ENCODE measurements at regions of chr3 and their contacts with region 1.

Region 1: GRCh38 chr3:51434746-51435327 is 43.8 kb downstream of the RBM15B start:
- DNase-seq: peak; percentile 46 to 48
- H3K4me3 ChIP-seq: no peak overlapping the region
- H3K4me3 Mint-ChIP-seq: no peak overlapping the region
- H3K27ac Mint-ChIP-seq: no peak overlapping the region
- H3K4me1 ChIP-seq: no peaks in the 10 kb centered on the region
- H3K4me1 Mint-ChIP-seq: no peaks in the 10 kb centered on the region
- H3K27me3 ChIP-seq: no peaks in the 10 kb centered on the region
- H3K27me3 Mint-ChIP-seq: no peaks in the 10 kb centered on the region
- CTCF ChIP-seq: peak; percentile 45 to 76

Region 2: DNA sequence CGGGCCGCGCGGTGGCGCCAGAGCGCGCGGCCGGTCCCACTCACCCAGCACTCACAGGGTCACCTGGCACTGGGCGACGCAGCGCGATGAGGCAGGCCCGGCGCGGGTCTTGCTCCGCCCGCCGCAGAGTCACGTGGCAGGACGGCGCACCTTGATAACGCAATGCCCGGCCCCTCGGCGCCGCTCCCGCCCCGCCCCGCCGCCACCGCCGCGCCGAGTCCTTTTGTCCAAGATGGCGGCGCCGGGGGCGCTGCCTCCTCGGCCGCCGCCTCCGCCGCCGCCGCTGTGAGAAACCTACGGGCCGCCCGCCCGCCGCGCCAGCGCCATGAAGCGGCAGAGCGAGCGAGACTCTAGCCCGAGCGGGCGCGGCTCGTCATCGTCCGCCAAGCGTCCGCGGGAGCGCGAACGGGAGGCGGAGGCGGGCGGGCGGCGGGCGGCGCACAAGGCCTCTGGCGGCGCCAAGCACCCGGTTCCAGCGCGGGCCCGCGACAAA is 43.7 kb before region 1 on chr3 and contains the start of gene RBM15B:
- CTCF ChIA-PET with region 1: no interaction called
- POLR2A ChIA-PET with region 1: no interaction called
- intact Hi-C with region 1: loop called (anchors 1 kb)
- DNase-seq: peak; percentile 97 to 98
- H3K4me3 ChIP-seq: peak within 1 kb of the TSS; percentile 90
- H3K4me3 Mint-ChIP-seq: peak within 1 kb of the TSS; percentile 74
- H3K27ac Mint-ChIP-seq: peak within 1 kb of the TSS; percentile 57
- H3K4me1 ChIP-seq: peaks cover 51% of the 10 kb centered on the region
- H3K4me1 Mint-ChIP-seq: peaks cover 34% of the 10 kb centered on the region
- H3K27me3 ChIP-seq: no peaks in the 10 kb centered on the region
- H3K27me3 Mint-ChIP-seq: no peaks in the 10 kb centered on the region
- CTCF ChIP-seq: peak in 1 of 2 experiments; percentile 87
- total RNA-seq, gene RBM15B: 32.3 and 33.7 TPM in 2 replicates

Measured in Caco-2 (cell line).